Activated CD4-positive, alpha-beta T cell treated with anti-CD3 and anti-CD28 coated beads, Interleukin-2, amount 10 ng/mL, durations not matched to agents 7 days and 5 days (primary cell): ENCODE measurements at regions of chr12 and their contacts with region 1.

Region 1: DNA sequence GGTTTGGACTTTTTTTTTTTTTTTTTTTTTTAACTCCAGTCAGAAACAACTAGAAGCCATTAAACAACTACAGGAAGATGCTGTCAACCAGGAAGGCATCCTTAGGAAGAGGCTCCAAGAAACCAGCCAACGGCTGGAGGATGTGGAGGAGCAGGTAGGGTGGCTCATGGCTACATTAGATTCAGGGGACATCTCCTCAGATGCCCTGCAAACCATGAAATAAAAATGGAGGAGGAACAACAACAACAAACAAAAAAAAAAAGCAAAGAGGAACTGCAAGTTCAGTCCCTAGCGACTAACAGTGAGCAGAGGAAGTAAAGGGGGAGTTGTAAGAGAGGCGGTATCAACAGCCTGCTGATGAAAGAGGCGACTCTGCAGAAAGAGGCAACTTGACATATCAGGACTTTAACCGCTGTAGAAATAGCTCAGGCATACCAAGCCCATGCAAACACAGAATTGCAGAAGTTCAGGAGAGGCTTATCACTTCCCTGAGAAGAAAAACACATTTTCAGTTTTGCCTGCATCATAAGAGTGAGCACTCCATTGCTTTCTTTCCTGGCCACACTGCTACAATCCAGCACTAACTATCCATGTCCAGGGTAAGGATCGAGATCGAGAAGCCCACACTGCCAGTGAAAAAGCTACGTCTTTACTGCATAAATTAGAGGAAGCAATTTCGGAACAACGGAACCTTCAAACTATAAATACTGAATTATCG is 103.5 kb upstream of the BCAT1 start:
- DNase-seq: peak; percentile 71
- H3K4me3 Mint-ChIP-seq: peak overlapping the region; percentile 93
- H3K27ac Mint-ChIP-seq: peak overlapping the region; percentile 99
- H3K4me1 Mint-ChIP-seq: peaks cover 40% of the 10 kb centered on the region
- H3K27me3 Mint-ChIP-seq: no peaks in the 10 kb centered on the region

Region 2: DNA sequence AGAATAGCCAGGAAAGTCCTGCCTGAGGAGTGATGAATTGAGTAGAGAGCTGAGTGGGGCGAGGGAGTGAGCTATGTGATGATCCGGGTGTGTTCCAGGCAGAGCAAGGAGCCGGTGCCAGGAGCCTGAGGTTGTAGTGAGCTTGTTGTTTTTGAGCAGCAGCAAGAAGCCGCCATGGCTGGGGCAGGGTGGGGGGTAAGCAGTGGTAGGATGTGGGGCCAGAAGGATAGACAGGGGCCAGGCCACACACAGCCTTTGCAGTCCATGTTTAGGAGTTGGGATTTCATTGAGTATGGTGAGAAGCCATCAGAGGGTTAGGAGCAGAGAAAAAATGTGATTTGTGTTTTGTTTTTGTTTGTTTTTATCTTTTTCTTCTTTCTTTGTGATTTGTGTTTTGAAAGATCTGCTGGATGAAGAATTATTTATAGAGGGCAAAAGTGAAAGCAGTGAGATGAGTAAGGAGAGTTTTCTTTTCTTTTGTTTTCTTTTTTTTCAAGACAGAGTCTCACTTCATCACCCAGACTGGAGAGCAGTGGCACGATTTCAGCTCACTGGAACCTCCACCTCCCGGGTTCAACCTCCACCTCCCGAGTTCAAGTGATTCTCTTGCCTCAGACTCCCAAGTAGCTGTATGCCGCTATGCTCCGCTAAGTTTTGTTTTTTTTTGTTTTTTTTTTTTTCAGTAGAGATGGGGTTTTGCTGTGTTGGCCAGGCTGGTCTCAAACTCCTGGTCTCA is 11.2 kb before region 1 on chr12:
- CTCF ChIA-PET with region 1: interaction called, 21 read pairs
- POLR2A ChIA-PET with region 1: interaction called, 3 read pairs
- DNase-seq: no peak
- H3K4me3 Mint-ChIP-seq: no peak overlapping the region
- H3K27ac Mint-ChIP-seq: peak overlapping the region; percentile 38
- H3K4me1 Mint-ChIP-seq: peaks cover 11% of the 10 kb centered on the region
- H3K27me3 Mint-ChIP-seq: peaks cover 10% of the 10 kb centered on the region

Region 3: GRCh38 chr12:25063873-25064628 is 11.7 kb after region 1 on chr12:
- CTCF ChIA-PET with region 1: no interaction called
- POLR2A ChIA-PET with region 1: no interaction called
- DNase-seq: no peak
- H3K4me3 Mint-ChIP-seq: no peak overlapping the region
- H3K27ac Mint-ChIP-seq: no peak overlapping the region
- H3K4me1 Mint-ChIP-seq: peaks cover 36% of the 10 kb centered on the region
- H3K27me3 Mint-ChIP-seq: no peaks in the 10 kb centered on the region

Region 4: GRCh38 chr12:25156061-25156460 is 103.7 kb after region 1 on chr12:
- CTCF ChIA-PET with region 1: interaction called, 3 read pairs
- POLR2A ChIA-PET with region 1: interaction called, 15 read pairs
- DNase-seq: no peak
- H3K4me3 Mint-ChIP-seq: no peak overlapping the region
- H3K27ac Mint-ChIP-seq: no peak overlapping the region
- H3K4me1 Mint-ChIP-seq: peaks cover 10% of the 10 kb centered on the region
- H3K27me3 Mint-ChIP-seq: peaks cover 4% of the 10 kb centered on the region